MCF 10A (cell line): ENCODE measurements at regions of chr10 and their contacts with region 1.

Region 1: DNA sequence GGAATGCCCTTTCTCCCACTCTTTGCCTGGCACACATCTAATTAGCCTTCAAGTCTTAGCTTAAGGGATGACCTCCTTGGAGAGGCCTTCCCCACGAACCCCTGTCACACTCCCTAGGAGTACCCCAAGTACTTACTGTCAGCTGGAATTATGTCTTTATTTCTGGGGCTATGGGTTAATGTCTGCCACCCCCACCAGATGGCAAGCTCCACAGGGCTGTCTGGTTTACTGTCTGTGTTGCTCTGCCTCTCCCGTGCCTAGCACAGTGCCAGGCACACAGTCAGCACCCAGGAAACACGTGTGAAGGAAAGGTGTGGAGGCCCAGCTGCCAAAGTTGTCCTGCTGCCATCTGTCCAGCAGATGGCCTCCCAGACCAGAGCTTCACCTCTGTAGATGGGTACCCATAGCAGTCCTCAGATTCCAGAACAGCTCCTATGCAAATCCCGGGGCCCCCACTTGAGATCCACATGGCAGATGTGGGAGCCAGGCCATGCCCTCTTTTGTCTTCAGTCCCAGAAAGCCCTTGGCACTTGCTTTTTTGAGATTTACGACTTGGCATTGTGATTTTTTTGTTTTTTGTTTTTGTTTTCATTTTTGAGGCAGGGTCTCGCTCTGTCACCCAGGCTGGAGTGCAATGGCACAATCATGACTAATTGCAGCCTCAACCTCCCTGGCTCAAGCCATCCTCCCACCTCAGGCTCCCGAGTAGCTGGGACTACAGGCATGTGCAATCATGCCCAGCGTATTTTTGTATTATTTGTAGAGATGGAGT is 17.2 kb upstream of the PALD1 start:
- DNase-seq: peak; percentile 74
- H3K4me3 Mint-ChIP-seq: no peak overlapping the region
- H3K27ac Mint-ChIP-seq: no peak overlapping the region
- H3K4me1 Mint-ChIP-seq: peaks cover 23% of the 10 kb centered on the region
- H3K27me3 Mint-ChIP-seq: peaks cover 17% of the 10 kb centered on the region
- CTCF ChIP-seq: peak; percentile 85

Region 2: DNA sequence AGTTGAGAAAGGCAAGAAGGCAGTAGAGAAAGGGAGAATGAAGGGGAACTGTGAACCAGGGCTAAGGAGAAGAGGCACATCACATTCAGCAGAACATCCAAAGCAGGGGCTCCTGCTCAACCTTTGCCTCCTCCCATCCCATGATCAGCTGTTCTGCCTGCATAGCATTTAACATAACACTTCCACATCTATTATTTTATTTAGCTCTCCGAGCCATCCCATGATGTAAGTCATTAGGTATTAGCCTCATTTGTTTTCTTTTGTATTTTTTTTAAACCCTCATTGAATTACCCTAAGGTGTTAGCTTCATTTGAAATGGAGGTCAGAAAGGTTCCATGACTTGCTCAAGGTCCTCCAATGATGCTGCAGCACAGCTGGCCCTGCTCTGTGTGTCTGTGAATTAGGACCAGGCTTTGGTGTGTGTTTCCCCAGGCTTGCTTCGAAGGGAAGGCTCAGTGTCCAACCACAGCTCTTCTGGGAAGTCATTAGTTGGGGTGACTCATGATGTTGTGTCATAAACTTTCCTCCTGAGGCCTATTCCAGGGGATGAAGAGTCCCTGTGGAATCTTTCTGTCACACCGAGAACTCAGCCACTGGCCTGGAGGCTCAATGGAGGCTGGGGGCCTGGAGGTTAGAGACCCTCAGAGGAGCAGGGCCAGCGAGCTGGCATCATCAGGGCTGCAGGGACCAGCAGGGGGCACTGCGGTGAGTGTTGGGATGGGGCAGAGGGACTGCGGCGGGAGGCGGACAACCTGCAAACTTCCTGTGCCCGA is 194.1 kb before region 1 on chr10:
- CTCF ChIA-PET with region 1: no interaction called
- POLR2A ChIA-PET with region 1: no interaction called
- intact Hi-C with region 1: no loop called
- DNase-seq: peak; percentile 95
- H3K4me3 Mint-ChIP-seq: peak overlapping the region; percentile 3
- H3K27ac Mint-ChIP-seq: peak overlapping the region; percentile 92
- H3K4me1 Mint-ChIP-seq: peaks cover 30% of the 10 kb centered on the region
- H3K27me3 Mint-ChIP-seq: no peaks in the 10 kb centered on the region
- CTCF ChIP-seq: peak; percentile 43

Region 3: DNA sequence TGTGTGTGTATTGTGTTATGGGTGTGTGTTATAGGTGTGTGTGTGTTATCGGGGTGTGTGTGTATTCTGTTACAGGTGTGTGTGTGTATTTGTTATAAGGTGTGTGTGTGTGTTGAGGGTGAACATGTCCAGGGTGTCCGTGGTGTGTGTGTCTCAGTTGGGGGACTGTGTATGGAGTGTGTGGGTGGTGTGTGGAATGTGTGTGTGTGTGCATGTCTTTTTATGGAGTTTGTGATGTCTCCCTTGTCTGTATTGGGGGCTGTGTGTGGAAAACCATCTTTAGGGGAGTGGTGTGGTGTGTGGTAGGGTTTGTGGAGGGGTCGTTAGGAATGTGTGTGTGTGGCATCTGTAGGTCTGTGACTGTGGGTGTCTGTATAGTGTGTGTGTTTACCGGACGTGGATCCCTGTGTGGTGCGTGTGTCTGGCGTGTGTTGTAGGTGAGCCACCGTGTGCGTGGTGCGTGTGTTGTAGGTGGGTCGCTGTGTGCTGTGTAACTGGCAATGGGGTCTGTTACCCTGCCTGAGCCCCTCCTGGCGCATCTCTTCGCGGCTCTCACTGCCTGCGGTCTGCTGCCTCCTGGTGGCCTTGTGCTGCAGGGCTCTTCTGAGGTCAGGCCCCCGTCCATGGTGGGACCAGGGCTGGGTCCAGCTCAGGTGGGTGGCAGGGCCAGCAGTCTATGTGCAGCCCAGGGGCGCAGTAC is 78.8 kb after region 1 on chr10:
- CTCF ChIA-PET with region 1: interaction called, 98 read pairs
- POLR2A ChIA-PET with region 1: interaction called, 3 read pairs
- intact Hi-C with region 1: loop called (anchors 1 kb)
- DNase-seq: peak; percentile 43
- H3K4me3 Mint-ChIP-seq: no peak overlapping the region
- H3K27ac Mint-ChIP-seq: no peak overlapping the region
- H3K4me1 Mint-ChIP-seq: no peaks in the 10 kb centered on the region
- H3K27me3 Mint-ChIP-seq: peaks cover 26% of the 10 kb centered on the region
- CTCF ChIP-seq: peak; percentile 75

Region 4: GRCh38 chr10:70880077-70880534 is 418.7 kb after region 1 on chr10:
- CTCF ChIA-PET with region 1: interaction called, 6 read pairs
- POLR2A ChIA-PET with region 1: no interaction called
- intact Hi-C with region 1: loop called (anchors 2 kb)
- DNase-seq: peak; percentile 82
- H3K4me3 Mint-ChIP-seq: no peak overlapping the region
- H3K27ac Mint-ChIP-seq: no peak overlapping the region
- H3K4me1 Mint-ChIP-seq: no peaks in the 10 kb centered on the region
- H3K27me3 Mint-ChIP-seq: no peaks in the 10 kb centered on the region
- CTCF ChIP-seq: peak; percentile 77